Dendritic cell treated with granulocyte-macrophage colony-stimulating factor and Interleukin-4, amounts not matched to agents 40 ng/mL and 50 ng/mL, for 4 days (primary cell): ENCODE measurements at regions of chr22 and their contacts with region 1.

Region 1: DNA sequence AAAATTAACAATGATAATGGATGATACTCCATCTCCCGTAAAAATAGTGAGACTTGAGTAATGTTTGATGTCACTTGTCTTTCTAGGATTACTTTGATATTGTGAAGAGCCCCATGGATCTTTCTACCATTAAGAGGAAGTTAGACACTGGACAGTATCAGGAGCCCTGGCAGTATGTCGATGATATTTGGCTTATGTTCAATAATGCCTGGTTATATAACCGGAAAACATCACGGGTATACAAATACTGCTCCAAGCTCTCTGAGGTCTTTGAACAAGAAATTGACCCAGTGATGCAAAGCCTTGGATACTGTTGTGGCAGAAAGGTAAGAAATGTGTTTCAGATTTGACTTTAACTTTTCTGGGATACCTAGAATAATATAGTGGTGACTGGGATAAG is 48.0 kb upstream of the L3MBTL2 start:
- H3K4me3 Mint-ChIP-seq: no peak overlapping the region
- H3K27ac Mint-ChIP-seq: no peak overlapping the region
- H3K4me1 Mint-ChIP-seq: peaks cover 5% of the 10 kb centered on the region
- H3K27me3 Mint-ChIP-seq: no peaks in the 10 kb centered on the region

Region 2: GRCh38 chr22:40834619-40835018 is 322.5 kb before region 1 on chr22:
- intact Hi-C with region 1: loop called (anchors 5 kb)
- H3K4me3 Mint-ChIP-seq: no peak overlapping the region
- H3K27ac Mint-ChIP-seq: no peak overlapping the region
- H3K4me1 Mint-ChIP-seq: no peaks in the 10 kb centered on the region
- H3K27me3 Mint-ChIP-seq: no peaks in the 10 kb centered on the region

Region 3: GRCh38 chr22:41028841-41029240 is 128.2 kb before region 1 on chr22:
- intact Hi-C with region 1: no loop called
- H3K4me3 Mint-ChIP-seq: no peak overlapping the region
- H3K27ac Mint-ChIP-seq: peak overlapping the region; percentile 31
- H3K4me1 Mint-ChIP-seq: peaks cover 16% of the 10 kb centered on the region
- H3K27me3 Mint-ChIP-seq: no peaks in the 10 kb centered on the region

Region 4: GRCh38 chr22:41117127-41117965 is 39.7 kb before region 1 on chr22:
- intact Hi-C with region 1: no loop called
- H3K4me3 Mint-ChIP-seq: no peak overlapping the region
- H3K27ac Mint-ChIP-seq: no peak overlapping the region
- H3K4me1 Mint-ChIP-seq: peaks cover 27% of the 10 kb centered on the region
- H3K27me3 Mint-ChIP-seq: no peaks in the 10 kb centered on the region

Region 5: DNA sequence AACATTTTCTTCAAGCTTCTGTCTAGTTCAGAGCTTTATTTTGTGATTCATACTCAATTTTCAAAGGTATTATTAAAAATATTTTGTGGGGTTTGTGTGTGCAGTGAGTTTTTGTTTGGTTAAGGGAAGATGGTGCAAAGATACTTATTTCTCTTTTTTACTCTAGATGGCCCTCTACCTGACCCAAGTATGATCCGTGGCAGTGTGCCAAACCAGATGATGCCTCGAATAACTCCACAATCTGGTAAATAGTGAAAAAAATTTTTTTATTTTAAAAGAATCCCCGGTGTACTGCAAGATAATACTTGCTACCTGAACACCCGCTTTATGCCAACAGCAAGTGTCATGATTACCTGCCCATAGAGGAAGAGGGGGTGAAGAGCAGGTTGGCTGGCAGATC is 10.5 kb before region 1 on chr22:
- intact Hi-C with region 1: no loop called
- H3K4me3 Mint-ChIP-seq: no peak overlapping the region
- H3K27ac Mint-ChIP-seq: no peak overlapping the region
- H3K4me1 Mint-ChIP-seq: no peaks in the 10 kb centered on the region
- H3K27me3 Mint-ChIP-seq: no peaks in the 10 kb centered on the region

Region 6: DNA sequence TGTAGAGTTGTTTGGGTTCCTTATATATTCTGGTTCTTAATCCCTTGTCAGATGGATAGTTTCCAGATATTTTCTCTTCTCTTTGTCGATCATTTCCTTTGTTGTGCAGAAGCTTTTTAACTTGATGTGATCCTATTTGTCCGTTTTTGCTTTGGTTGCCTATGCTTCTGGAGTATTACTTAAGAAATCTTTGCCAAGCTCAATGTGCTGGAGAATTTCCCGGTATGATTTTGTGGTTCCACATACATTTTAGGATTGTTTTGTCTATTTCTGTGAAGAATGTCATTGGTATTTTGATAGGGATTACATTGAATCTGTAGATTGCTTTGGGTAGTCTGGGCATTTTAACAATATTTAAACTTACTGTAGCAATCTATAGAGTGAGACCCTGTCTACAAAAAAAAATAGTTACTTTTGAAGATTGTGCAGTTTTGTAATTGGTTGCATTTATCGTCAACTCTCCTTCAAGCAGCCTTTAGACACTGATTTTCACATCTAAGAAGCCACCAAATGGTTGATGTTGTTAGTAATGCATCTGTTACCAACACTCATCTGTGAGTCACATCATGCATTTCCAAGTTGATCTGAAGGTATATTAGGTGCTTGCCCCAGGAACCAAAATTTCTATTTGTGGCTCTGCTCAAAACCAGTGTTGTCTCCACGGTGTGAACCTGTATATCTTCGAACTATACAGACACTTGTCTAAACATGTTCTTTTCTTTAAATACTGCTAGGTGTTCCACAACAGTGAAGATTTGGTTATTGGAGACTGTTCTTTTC is 485.4 kb after region 1 on chr22:
- intact Hi-C with region 1: loop called (anchors 10 kb)
- H3K4me3 Mint-ChIP-seq: no peak overlapping the region
- H3K27ac Mint-ChIP-seq: no peak overlapping the region
- H3K4me1 Mint-ChIP-seq: no peaks in the 10 kb centered on the region
- H3K27me3 Mint-ChIP-seq: no peaks in the 10 kb centered on the region